ENCODE measurements at regions of chrX and their contacts with region 1.

Region 1: DNA sequence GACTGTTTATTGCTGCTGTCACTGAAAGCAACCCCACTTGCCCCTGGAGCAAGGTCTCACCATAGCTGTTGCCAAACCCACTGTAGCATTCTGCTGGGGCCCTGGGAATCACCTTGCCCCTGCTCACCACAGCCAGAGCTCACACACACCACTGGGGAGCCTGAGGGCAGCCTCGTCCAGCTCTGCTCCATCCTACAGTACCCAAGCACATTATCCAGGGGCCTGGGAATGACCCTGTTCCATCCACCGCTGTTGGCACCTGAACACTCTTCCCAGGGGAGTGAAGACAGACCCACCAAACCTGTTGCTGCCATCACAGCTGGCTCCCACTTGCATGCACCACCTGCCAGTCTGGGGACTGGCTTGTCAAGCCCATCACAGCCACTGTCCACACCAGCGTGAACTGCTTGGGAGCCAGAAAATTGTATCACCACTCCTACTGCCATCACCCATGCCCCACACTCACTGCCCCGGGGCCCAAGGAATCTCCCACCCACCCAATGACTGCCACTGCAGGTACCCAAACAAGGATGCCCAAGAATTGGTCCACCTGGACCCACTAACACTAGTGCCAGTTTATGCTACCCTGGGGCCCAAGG is 811.3 kb downstream of the KLHL13 start:
- DNase-seq: no peak
- H3K4me3 ChIP-seq: no peak overlapping the region
- CTCF ChIP-seq: no peak
- POLR2A ChIP-seq: no peak

Region 2: GRCh38 chrX:117429501-117429900 is 124.2 kb after region 1 on chrX:
- intact Hi-C with region 1: no loop called
- DNase-seq: no peak
- H3K4me3 ChIP-seq: no peak overlapping the region
- CTCF ChIP-seq: no peak
- POLR2A ChIP-seq: no peak

Region 3: GRCh38 chrX:117607561-117607960 is 302.3 kb after region 1 on chrX:
- intact Hi-C with region 1: loop called (anchors 10 kb)
- DNase-seq: no peak
- H3K4me3 ChIP-seq: no peak overlapping the region
- CTCF ChIP-seq: no peak
- POLR2A ChIP-seq: no peak

Measured in lower leg skin (tissue), 4 donors.